CD8-positive, alpha-beta T cell (primary cell): ENCODE measurements at regions of chr10 and their contacts with region 1.

Region 1: GRCh38 chr10:1048732-1049424 is at the start of gene IDI1:
- DNase-seq: peak; percentile 91 to 99 (median 95)
- ATAC-seq: peak; percentile 74
- H3K4me3 ChIP-seq: peak within 1 kb of the TSS; percentile 81 to 91
- H3K4me3 Mint-ChIP-seq: peak within 1 kb of the TSS; percentile 94
- H3K27ac ChIP-seq: peak within 1 kb of the TSS; percentile 97 to 100
- H3K27ac Mint-ChIP-seq: peak within 1 kb of the TSS; percentile 99
- H3K4me1 ChIP-seq: peaks cover 57% of the 10 kb centered on the region
- H3K4me1 Mint-ChIP-seq: peaks cover 68% of the 10 kb centered on the region
- H3K27me3 ChIP-seq: no peaks in the 10 kb centered on the region
- H3K27me3 Mint-ChIP-seq: no peaks in the 10 kb centered on the region
- CTCF ChIP-seq: no peak
- total RNA-seq, gene IDI1: 307 to 317 TPM

Region 2: DNA sequence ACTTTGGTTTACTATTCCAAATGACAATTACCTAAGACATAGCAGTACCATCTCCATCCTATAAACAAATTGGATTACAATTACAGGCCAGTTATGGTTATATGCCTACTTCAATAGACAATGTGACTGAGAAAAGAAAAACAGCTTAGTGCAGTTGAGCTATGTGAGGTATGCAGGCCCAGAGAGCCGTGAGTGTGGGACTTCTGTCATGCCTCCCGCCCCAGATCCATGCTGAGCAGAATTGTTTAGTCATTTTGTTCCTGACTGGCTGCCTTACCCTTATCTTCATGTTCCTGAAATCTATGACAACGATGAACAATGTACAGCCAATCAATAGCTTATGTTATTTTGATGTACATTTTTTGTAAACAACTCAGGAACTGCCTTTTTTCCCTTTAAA is 139.0 kb before region 1 on chr10:
- CTCF ChIA-PET with region 1: no interaction called
- POLR2A ChIA-PET with region 1: no interaction called
- intact Hi-C with region 1: no loop called
- DNase-seq: no peak
- ATAC-seq: no peak
- H3K4me3 ChIP-seq: no peak overlapping the region
- H3K4me3 Mint-ChIP-seq: no peak overlapping the region
- H3K27ac ChIP-seq: no peak overlapping the region
- H3K27ac Mint-ChIP-seq: peak overlapping the region; percentile 20
- H3K4me1 ChIP-seq: no peaks in the 10 kb centered on the region
- H3K4me1 Mint-ChIP-seq: peaks cover 28% of the 10 kb centered on the region
- H3K27me3 ChIP-seq: no peaks in the 10 kb centered on the region
- H3K27me3 Mint-ChIP-seq: no peaks in the 10 kb centered on the region
- CTCF ChIP-seq: no peak

Region 3: DNA sequence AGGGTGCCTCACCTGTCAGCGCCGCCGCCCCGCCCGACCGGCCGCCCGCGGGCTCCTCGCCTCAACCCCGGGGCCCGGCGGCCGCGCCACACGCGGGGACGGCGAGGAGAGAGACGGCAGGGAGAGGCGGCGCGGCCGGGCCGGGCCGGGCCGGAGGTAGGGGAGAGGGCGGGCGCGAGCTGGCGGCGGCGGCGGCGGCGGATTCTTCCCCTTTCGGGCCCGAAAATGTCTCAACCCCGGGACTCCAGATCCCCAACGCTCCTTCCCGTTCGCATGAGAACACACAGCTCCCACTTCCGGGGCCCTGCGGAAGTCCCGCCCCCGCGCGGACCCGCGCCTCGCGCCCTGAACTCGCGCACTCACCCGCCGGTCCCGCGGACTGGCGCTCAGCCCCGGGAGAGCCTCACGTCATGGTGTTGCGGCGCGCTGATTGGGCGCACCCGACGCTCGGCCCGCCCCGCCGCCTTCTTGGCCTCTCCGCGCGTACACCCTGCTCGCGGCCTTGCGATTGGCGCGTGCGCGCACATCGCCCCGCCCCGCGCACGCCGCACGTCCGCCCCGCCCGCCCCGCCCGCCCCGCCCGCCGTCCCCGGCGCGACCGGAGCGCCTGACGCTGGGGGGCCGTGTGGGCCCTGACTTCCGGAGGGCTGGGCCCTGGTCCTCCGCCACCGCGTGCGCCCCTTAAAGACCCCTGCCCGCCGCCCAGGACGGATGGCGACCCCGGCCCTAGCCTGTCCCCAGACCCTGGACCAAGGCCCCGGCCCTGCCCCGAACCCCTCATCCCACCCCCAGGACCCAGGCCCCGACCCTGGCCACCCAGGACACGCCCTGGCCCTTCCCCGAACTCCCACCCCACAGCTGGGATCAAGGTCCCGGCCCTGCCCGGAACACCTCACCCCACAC is 117.2 kb before region 1 on chr10 and contains the start of gene LARP4B:
- CTCF ChIA-PET with region 1: no interaction called
- POLR2A ChIA-PET with region 1: interaction called, 7 read pairs
- intact Hi-C with region 1: loop called (anchors 1 kb)
- DNase-seq: peak; percentile 93 to 99 (median 96)
- ATAC-seq: peak; percentile 98
- H3K4me3 ChIP-seq: peak within 1 kb of the TSS; percentile 42 to 64
- H3K4me3 Mint-ChIP-seq: peak within 1 kb of the TSS; percentile 96
- H3K27ac ChIP-seq: peak within 1 kb of the TSS; percentile 65 to 95
- H3K27ac Mint-ChIP-seq: peak within 1 kb of the TSS; percentile 95
- H3K4me1 ChIP-seq: peaks cover 30% of the 10 kb centered on the region
- H3K4me1 Mint-ChIP-seq: peaks cover 41% of the 10 kb centered on the region
- H3K27me3 ChIP-seq: no peaks in the 10 kb centered on the region
- H3K27me3 Mint-ChIP-seq: no peaks in the 10 kb centered on the region
- CTCF ChIP-seq: no peak
- total RNA-seq, gene LARP4B: 32.5 to 32.7 TPM

Region 4: DNA sequence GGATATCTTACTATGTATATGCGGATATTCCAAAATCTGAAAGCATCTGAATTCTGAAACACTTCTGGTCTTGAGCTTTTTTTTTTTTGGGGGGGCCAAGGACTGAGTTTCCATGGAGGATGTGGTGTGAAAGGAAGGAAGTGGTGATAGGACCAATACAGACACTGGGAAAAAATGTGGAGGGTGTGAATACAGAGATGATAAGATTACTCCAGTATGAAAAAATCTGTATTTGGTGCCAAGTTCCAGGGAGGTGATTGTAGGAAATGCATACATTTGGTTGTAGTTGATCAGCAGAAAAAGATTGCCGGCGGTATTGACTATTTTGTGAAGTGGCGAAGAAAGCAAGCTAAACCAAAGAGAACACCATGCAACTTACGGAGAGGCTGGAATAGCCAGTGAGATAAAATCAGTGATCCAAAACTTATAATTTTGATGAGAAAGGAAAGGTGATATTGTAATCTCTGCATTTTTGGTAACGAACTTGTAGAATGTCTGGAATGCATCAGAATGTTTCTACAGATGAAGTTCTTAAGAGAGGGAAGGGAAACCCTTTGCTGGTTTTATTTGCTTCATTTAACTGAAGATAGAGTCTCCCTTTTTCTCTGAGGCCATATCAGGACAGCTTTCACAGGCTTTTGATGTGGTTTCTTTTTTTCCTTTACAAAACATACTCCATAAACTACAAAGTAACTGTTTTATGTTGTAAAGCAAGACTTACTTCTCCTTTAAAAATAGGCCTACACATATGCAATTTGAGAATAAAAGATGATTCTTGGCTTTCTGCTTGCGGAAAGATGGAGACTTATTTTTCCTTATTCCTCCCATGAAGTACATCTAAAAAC is 13.3 kb after region 1 on chr10:
- CTCF ChIA-PET with region 1: interaction called, 4 read pairs
- POLR2A ChIA-PET with region 1: interaction called, 18 read pairs
- intact Hi-C with region 1: loop called in 1 of 2 experiments (anchors 2 kb)
- DNase-seq: peak in 1 of 9 experiments; percentile 41
- ATAC-seq: peak; percentile 8
- H3K4me3 ChIP-seq: peak overlapping the region; percentile 23 to 25
- H3K4me3 Mint-ChIP-seq: peak overlapping the region; percentile 49
- H3K27ac ChIP-seq: peak overlapping the region; percentile 32 to 82
- H3K27ac Mint-ChIP-seq: peak overlapping the region; percentile 88
- H3K4me1 ChIP-seq: peaks cover 79% of the 10 kb centered on the region
- H3K4me1 Mint-ChIP-seq: peaks cover 83% of the 10 kb centered on the region
- H3K27me3 ChIP-seq: no peaks in the 10 kb centered on the region
- H3K27me3 Mint-ChIP-seq: no peaks in the 10 kb centered on the region
- CTCF ChIP-seq: no peak